Left ventricle myocardium superior (tissue), 1 donor: ENCODE measurements at regions of chr17 and their contacts with region 1.

Region 1: DNA sequence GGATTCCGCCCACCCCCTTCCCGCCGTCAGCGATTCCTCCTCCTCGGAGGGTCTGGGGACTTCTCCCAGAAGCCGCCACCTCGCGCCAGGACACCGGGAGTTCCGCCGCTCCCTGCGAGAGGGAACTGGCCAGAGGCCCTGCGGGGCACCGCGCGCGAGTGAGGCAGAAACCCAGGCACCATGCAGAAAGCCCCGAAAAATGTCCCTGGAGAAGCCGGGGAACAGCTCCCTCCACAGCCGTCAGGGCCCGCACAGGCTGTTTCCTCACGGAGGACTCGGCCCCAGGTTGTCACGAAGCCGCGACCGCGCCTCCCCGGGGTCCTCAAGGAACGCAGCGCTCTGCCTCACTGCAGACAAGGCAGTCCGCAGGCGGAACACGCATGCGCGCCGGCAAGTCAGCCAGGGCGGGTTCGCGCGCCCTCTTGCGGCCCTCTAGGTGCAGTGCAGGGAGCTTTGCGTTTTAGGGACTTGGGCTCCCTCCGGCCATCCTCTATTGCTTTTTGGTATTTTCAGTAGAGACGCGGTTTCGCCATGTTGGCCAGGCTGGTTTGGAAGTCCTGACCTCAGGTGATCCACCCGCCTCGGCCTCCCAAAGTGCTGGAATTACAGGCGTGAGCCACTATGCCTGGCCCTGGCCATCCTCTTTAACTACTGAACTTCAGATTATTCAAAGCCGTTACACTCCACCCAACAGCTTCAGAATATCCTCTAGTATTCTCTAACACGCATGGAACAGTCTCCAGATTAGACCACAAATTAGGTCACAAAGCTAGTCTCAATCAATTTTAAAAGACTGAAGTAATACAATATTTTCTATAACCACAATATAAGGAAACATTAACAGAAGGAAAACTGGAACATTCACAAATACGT is 20.3 kb upstream of the ZNF287 start:
- DNase-seq: peak; percentile 98
- ATAC-seq: peak; percentile 91

Region 2: GRCh38 chr17:16537130-16537458 is 52.2 kb before region 1 on chr17:
- intact Hi-C with region 1: loop called (anchors 5 kb)
- DNase-seq: no peak
- ATAC-seq: no peak

Region 3: GRCh38 chr17:16551878-16552636 is 37.3 kb before region 1 on chr17:
- intact Hi-C with region 1: no loop called
- DNase-seq: no peak
- ATAC-seq: no peak